Activated CD4-positive, alpha-beta memory T cell treated with anti-CD3 and anti-CD28 coated beads, Interleukin-2, amount 10 ng/mL, durations not matched to agents 7 days and 5 days (primary cell): ENCODE measurements at regions of chr5 and their contacts with region 1.

Region 1: GRCh38 chr5:75566710-75567309 is 44.4 kb upstream of the ANKDD1B start:
- DNase-seq: peak; percentile 30
- H3K4me3 Mint-ChIP-seq: peak overlapping the region; percentile 68
- H3K27ac Mint-ChIP-seq: peak overlapping the region; percentile 78
- H3K4me1 Mint-ChIP-seq: peaks cover 29% of the 10 kb centered on the region
- H3K27me3 Mint-ChIP-seq: no peaks in the 10 kb centered on the region

Region 2: GRCh38 chr5:75511435-75512384 is 55.1 kb before region 1 on chr5 and contains the starts of genes CERT1 and POLK:
- CTCF ChIA-PET with region 1: no interaction called
- POLR2A ChIA-PET with region 1: interaction called, 11 read pairs
- DNase-seq: peak; percentile 98
- H3K4me3 Mint-ChIP-seq: peak within 1 kb of the TSS; percentile 95
- H3K27ac Mint-ChIP-seq: peak within 1 kb of the TSS; percentile 86
- H3K4me1 Mint-ChIP-seq: peaks cover 56% of the 10 kb centered on the region
- H3K27me3 Mint-ChIP-seq: no peaks in the 10 kb centered on the region
- total RNA-seq, gene CERT1: 36.2 to 39.7 TPM
- total RNA-seq, gene POLK: 28.3 to 28.7 TPM